Right ventricle myocardium inferior (tissue), 1 donor: ENCODE measurements at regions of chr17 and their contacts with region 1.

Region 1: DNA sequence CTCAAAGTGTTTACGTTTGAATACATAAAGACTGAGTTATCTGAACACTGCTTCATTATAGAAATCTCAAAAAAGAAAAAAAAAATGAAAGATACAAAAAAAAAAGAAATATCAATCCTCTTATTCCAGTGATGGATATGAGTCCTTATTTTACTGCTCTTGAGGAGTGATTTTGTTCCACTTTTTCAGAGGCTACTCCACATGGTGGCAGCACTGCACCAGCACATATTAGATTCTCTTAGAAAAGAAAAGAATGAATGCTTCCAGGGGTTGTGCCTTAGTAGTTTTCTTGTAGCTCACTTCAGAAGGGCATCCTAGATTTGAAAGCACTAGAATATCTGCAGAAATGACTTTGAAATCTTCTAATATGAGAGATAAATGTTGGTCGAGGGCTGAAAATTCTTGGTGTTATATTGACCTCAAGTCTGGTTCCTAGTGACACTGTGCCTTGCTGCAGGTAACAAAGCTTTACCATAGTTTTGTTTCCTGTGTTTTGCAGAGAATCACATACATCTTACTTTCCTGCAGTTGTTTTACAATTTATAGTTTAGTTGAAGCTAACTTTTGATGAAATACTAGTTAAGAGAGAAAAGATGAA is 25.9 kb downstream of the AP2B1 start:
- DNase-seq: no peak
- ATAC-seq: no peak

Region 2: DNA sequence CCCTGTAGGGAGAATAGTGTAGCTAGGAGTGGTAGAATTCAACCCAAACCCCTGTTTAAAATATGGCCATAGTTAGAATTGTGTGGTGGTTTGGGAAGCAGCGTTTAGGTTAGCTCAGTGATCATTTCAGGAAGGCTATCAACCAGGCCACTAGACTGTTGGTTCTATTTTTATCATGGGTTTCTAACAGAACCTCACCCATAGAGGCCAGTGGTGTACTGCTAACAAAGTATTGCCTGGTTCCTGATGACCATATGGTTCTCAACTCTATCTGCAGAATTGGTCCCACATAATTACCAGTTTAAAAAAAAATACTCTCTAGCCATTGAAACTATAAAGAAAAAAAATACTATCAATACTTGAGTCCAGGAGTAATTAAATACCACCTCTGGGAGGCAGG is 47.9 kb after region 1 on chr17:
- intact Hi-C with region 1: loop called (anchors 5 kb)
- DNase-seq: no peak
- ATAC-seq: peak; percentile 86